Left cardiac atrium (tissue), 4 donors: ENCODE measurements at regions of chr16 and their contacts with region 1.

Region 1: DNA sequence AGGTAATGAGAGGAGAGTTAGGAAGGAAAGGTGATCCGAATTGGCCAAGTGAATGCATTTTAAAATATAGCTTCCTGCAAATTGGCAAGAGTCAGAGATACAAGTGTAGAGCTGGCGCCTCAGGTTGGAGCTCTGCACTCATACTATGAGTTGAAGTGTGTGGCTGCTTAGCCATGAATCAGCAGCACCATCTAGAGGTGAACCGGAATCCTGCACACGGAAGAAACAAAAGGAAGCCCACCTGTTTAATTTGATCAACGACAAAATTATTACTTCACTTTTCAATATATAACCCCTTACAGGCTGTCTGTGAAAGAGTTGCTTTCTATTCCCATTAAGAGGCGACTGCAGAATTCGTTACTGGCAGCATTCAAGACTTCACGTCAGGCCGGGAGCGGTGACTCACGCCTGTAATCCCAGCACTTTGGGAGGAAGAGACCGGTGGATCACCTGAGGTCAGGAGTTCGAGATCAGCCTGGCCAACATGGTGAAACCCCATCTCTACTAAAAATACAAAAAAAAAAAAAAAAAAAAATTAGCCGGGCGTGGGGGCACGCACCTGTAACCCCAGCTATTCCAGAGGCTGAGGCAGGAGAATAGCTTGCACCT is 1253.7 kb upstream of the CDH8 start:
- DNase-seq: peak; percentile 29
- ATAC-seq: peak; percentile 70 to 87

Region 2: GRCh38 chr16:62190426-62190825 is 1099.5 kb before region 1 on chr16:
- intact Hi-C with region 1: loop called in 1 of 2 experiments (anchors 5 kb)
- DNase-seq: no peak
- ATAC-seq: no peak

Region 3: GRCh38 chr16:63157818-63158217 is 132.1 kb before region 1 on chr16:
- intact Hi-C with region 1: no loop called
- DNase-seq: no peak
- ATAC-seq: no peak